ENCODE measurements at regions of chr16 and their contacts with region 1.

Region 1: GRCh38 chr16:82263521-82264143 is 93.6 kb upstream of the MPHOSPH6 start:
- DNase-seq: peak in 1 of 2 experiments; percentile 68
- H3K4me3 ChIP-seq: no peak overlapping the region
- H3K27ac ChIP-seq: no peak overlapping the region
- H3K4me1 ChIP-seq: no peaks in the 10 kb centered on the region
- H3K27me3 ChIP-seq: no peaks in the 10 kb centered on the region
- CTCF ChIP-seq: peak; percentile 81 to 93 (median 87)
- EP300 ChIP-seq: no peak
- POLR2A ChIP-seq: no peak
- RAD21 ChIP-seq: peak; percentile 96 to 97

Region 2: DNA sequence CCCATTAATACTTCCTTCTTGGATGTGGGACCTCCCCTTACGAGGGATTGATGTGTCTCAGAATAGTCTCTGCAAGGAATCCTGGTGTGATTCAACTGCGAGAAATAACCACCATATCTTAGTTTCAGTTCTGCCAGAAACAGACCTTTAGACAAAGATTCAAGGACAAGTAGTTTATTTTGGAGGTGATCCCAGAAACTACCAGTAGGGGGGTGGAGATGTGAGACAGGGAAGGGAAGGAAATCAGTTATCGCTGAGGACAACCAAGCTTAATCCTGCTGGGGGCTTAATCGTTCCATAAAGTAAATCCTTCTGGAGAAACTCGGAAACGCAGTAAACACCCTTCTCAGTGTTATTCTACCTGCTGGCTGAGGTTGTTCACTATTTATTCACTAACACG is 247.4 kb before region 1 on chr16:
- CTCF ChIA-PET with region 1: no interaction called
- POLR2A ChIA-PET with region 1: no interaction called
- DNase-seq: no peak
- H3K4me3 ChIP-seq: no peak overlapping the region
- H3K27ac ChIP-seq: no peak overlapping the region
- H3K4me1 ChIP-seq: no peaks in the 10 kb centered on the region
- H3K27me3 ChIP-seq: no peaks in the 10 kb centered on the region; a peak in 2 of 7 replicates
- CTCF ChIP-seq: peak in 2 of 3 experiments; percentile 27 to 43; a peak in 2 of 4 replicates
- EP300 ChIP-seq: no peak
- POLR2A ChIP-seq: no peak
- RAD21 ChIP-seq: peak in 1 of 2 experiments; percentile 30; a peak in 2 of 4 replicates

Region 3: GRCh38 chr16:82116535-82116934 is 147.1 kb before region 1 on chr16:
- CTCF ChIA-PET with region 1: no interaction called
- POLR2A ChIA-PET with region 1: no interaction called
- DNase-seq: no peak
- H3K4me3 ChIP-seq: no peak overlapping the region
- H3K27ac ChIP-seq: no peak overlapping the region
- H3K4me1 ChIP-seq: no peaks in the 10 kb centered on the region
- H3K27me3 ChIP-seq: no peaks in the 10 kb centered on the region
- CTCF ChIP-seq: no peak
- EP300 ChIP-seq: no peak
- POLR2A ChIP-seq: no peak
- RAD21 ChIP-seq: no peak

Region 4: GRCh38 chr16:82248677-82249076 is 15.0 kb before region 1 on chr16:
- CTCF ChIA-PET with region 1: interaction called, 24 read pairs
- POLR2A ChIA-PET with region 1: no interaction called
- DNase-seq: no peak
- H3K4me3 ChIP-seq: no peak overlapping the region
- H3K27ac ChIP-seq: no peak overlapping the region
- H3K4me1 ChIP-seq: no peaks in the 10 kb centered on the region
- H3K27me3 ChIP-seq: no peaks in the 10 kb centered on the region
- CTCF ChIP-seq: no peak
- EP300 ChIP-seq: no peak
- POLR2A ChIP-seq: no peak
- RAD21 ChIP-seq: no peak

Region 5: DNA sequence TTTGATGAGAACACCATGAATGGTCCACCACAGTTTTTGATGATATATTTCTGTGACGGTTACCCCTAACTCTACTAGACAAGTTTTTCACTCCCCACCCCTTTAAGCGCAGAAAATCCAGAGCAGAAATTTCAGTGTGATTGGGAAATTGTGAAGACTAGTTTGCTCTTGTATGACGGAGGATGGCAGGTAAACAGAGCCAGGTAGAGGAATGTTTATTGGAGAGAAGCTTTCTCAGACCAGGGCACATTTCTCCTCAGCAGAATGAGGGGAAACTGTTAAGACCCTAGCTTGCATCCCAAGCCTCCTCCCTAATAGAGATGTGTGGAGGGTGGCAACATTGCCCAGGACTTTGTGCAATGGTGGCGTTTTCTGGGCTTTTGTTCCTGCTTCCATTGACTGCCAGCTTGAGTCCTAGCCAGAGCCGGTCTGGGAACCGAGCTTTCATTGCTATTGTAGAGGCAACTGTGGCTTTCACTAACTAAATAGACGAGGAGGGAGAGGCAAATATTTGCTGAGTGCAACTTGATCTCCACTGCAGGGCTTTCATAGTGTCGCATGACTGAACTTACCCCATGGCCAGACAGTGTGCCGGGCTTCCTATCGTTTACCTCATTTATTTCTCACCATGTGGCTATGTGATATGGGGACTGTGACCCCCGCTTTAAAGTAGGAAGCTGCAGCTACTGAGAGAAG is 66.0 kb after region 1 on chr16:
- CTCF ChIA-PET with region 1: interaction called, 18 read pairs
- POLR2A ChIA-PET with region 1: no interaction called
- DNase-seq: no peak
- H3K4me3 ChIP-seq: no peak overlapping the region
- H3K27ac ChIP-seq: no peak overlapping the region
- H3K4me1 ChIP-seq: no peaks in the 10 kb centered on the region
- H3K27me3 ChIP-seq: no peaks in the 10 kb centered on the region
- CTCF ChIP-seq: no peak
- EP300 ChIP-seq: no peak
- POLR2A ChIP-seq: no peak
- RAD21 ChIP-seq: no peak

Region 6: GRCh38 chr16:82439671-82440293 is 176.2 kb after region 1 on chr16:
- CTCF ChIA-PET with region 1: interaction called, 16 read pairs
- POLR2A ChIA-PET with region 1: no interaction called
- DNase-seq: peak in 1 of 2 experiments; percentile 57
- H3K4me3 ChIP-seq: no peak overlapping the region
- H3K27ac ChIP-seq: no peak overlapping the region
- H3K4me1 ChIP-seq: peaks cover 0 to 2% (median 0%) of the 10 kb centered on the region in 4 experiments; a peak in 1 of 7 replicates
- H3K27me3 ChIP-seq: no peaks in the 10 kb centered on the region
- CTCF ChIP-seq: peak; percentile 37 to 78 (median 53); a peak in 3 of 4 replicates
- EP300 ChIP-seq: no peak
- POLR2A ChIP-seq: no peak
- RAD21 ChIP-seq: peak; percentile 35 to 42; a peak in 3 of 4 replicates

Region 7: DNA sequence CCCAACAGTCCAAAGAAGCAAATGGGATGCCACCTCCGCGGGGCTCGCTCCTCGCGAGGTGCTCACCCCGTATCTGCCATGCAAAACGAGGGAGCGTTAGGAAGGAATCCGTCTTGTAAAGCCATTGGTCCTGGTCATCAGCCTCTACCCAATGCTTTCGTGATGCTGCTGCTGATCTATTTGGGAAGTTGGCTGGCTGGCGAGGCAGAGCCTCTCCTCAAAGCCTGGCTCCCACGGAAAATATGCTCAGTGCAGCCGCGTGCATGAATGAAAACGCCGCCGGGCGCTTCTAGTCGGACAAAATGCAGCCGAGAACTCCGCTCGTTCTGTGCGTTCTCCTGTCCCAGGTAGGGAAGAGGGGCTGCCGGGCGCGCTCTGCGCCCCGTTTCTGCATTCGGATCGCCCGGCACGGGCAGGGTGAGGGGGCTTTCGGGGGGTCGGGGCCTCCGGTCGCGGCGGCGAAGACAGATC is 363.2 kb after region 1 on chr16 and contains the start of gene CDH13:
- CTCF ChIA-PET with region 1: interaction called, 10 read pairs
- POLR2A ChIA-PET with region 1: no interaction called
- DNase-seq: peak in 1 of 2 experiments; percentile 60
- H3K4me3 ChIP-seq: peak within 1 kb of the TSS; percentile 55 to 74 (median 62)
- H3K27ac ChIP-seq: no peak within 1 kb of the TSS
- H3K4me1 ChIP-seq: peaks cover 2 to 11% (median 7%) of the 10 kb centered on the region in 4 experiments
- H3K27me3 ChIP-seq: peaks cover 16 to 46% (median 40%) of the 10 kb centered on the region in 4 experiments
- CTCF ChIP-seq: no peak
- EP300 ChIP-seq: no peak
- POLR2A ChIP-seq: no peak
- RAD21 ChIP-seq: no peak
- total RNA-seq, gene CDH13: 2.3 and 2.6 TPM in 2 replicates